Dendritic cell treated with granulocyte-macrophage colony-stimulating factor and Interleukin-4, amounts not matched to agents 40 ng/mL and 50 ng/mL, for 4 days (primary cell): ENCODE measurements at regions of chr9 and their contacts with region 1.

Region 1: GRCh38 chr9:33473643-33474352 is at the start of gene NOL6:
- H3K4me3 Mint-ChIP-seq: peak within 1 kb of the TSS; percentile 89
- H3K27ac Mint-ChIP-seq: peak within 1 kb of the TSS; percentile 84
- H3K4me1 Mint-ChIP-seq: peaks cover 19% of the 10 kb centered on the region
- H3K27me3 Mint-ChIP-seq: no peaks in the 10 kb centered on the region

Region 2: DNA sequence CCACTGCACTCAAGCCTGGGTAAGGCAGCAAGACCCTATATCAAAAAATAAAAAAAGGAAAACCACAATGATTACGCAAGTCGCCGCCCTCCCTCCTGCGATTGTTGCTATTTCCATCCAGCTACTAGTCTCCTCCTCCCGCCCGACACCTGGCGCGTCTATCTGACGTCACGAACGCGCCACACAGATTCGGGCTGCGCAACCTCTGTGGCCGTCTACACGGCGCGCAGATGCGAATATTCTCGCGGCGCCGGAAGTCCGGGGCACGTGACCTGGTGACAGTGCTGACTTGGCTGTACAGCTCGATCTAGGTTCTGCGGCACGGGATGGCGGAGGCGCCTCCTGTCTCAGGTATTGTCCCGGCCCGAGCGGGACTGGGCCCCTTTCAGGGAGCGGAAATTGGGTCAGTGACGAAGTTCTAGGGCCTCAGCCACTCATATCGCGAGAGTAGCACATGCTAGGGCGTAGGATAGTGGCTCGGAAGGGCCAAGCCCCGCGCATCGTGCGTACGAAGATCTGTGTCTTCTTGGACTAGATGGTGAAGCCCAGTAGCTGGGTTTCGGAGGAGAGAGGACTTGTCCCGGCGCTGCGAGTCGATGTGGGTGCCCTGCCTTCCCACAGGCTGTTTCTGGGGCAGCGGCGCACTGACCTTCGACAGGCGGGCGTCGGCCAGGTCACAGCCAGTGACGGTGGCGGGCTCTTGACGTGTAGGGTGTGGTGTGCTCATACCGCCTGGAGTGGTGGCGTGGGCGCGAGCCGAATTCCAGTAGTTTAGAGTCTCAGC is 183.4 kb before region 1 on chr9 and contains the start of gene NFX1:
- intact Hi-C with region 1: loop called (anchors 10 kb)
- H3K4me3 Mint-ChIP-seq: peak within 1 kb of the TSS; percentile 96
- H3K27ac Mint-ChIP-seq: peak within 1 kb of the TSS; percentile 100
- H3K4me1 Mint-ChIP-seq: peaks cover 32% of the 10 kb centered on the region
- H3K27me3 Mint-ChIP-seq: no peaks in the 10 kb centered on the region